GM10248 (cell line): ENCODE measurements at regions of chr11 and their contacts with region 1.

Region 1: GRCh38 chr11:76010051-76010450 is 195.0 kb downstream of the UVRAG start:
- DNase-seq: no peak
- CTCF ChIP-seq: no peak

Region 2: GRCh38 chr11:75996523-75997442 is 13.3 kb before region 1 on chr11:
- CTCF ChIA-PET with region 1: interaction called, 17 read pairs
- POLR2A ChIA-PET with region 1: interaction called, 6 read pairs
- DNase-seq: no peak
- CTCF ChIP-seq: no peak

Region 3: GRCh38 chr11:76185931-76186401 is 175.9 kb after region 1 on chr11:
- CTCF ChIA-PET with region 1: no interaction called
- POLR2A ChIA-PET with region 1: no interaction called
- DNase-seq: no peak
- CTCF ChIP-seq: no peak